ENCODE measurements at regions of chr16 and their contacts with region 1.

Region 1: DNA sequence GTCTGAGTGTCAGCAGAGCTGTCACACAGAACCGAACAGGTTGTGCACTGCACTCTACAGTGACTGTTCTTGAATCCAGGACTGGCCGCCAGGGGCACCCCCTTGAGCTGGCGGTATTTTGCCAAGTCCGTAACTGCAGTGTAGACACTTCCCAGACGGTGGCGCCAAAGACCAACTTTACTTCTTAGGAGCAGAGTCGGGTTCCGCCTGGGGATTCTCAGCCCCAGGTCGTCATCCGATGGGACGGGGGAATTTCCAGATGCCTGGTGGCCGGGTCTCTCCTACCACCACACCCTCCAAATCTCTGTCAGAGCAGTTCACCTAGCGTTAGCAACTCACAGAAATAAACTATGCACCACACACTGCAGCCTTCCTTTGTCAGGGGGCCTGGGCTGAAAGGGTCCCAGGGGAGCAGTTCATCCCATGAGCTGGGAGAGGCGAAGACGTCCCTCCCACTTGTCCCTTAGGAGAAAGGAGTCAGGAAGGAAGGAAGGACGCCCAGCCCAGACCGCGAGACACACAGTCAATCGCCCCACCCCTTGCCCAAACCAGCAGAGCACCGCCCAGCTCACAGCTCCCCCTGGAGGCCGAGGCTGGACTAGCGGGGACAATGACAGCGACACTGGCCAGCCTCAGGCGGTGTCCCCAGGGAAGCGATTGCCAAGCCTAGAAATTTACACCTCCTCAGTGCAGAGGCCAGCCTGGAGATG is 7.4 kb upstream of the RIPOR1 start:
- DNase-seq: peak; percentile 95
- ATAC-seq: peak; percentile 70
- H3K4me3 Mint-ChIP-seq: peak overlapping the region; percentile 89
- H3K27ac Mint-ChIP-seq: peak overlapping the region; percentile 98
- H3K4me1 Mint-ChIP-seq: peaks cover 75% of the 10 kb centered on the region
- H3K27me3 Mint-ChIP-seq: no peaks in the 10 kb centered on the region
- CTCF ChIP-seq: peak; percentile 85

Region 2: DNA sequence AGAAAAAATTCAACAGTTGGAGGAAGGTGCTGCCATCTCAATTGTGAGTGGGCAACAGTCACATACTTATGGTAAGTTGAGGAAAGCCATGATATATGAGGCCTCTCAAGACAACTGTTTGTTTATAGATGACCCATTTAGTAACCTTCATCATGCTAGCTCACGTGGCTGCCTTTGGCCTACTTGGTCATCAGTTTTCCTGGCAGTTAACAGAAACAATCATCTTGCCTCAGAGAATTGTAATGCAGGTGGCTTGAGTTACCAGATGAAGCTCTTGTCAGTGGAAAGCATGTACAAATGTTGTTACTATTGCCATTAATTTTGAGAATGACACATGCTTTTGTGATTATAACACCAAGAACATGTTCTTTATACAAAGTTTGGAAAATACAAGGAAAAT is 142.6 kb before region 1 on chr16:
- CTCF ChIA-PET with region 1: no interaction called
- POLR2A ChIA-PET with region 1: interaction called, 12 read pairs
- intact Hi-C with region 1: no loop called
- DNase-seq: no peak
- ATAC-seq: no peak
- H3K4me3 Mint-ChIP-seq: no peak overlapping the region
- H3K27ac Mint-ChIP-seq: no peak overlapping the region
- H3K4me1 Mint-ChIP-seq: no peaks in the 10 kb centered on the region
- H3K27me3 Mint-ChIP-seq: peaks cover 5% of the 10 kb centered on the region
- CTCF ChIP-seq: no peak

Region 3: GRCh38 chr16:67499106-67499505 is 22.1 kb before region 1 on chr16:
- CTCF ChIA-PET with region 1: interaction called, 298 read pairs
- POLR2A ChIA-PET with region 1: interaction called, 98 read pairs
- intact Hi-C with region 1: loop called (anchors 1 kb)
- DNase-seq: no peak
- ATAC-seq: no peak
- H3K4me3 Mint-ChIP-seq: no peak overlapping the region
- H3K27ac Mint-ChIP-seq: no peak overlapping the region
- H3K4me1 Mint-ChIP-seq: peaks cover 28% of the 10 kb centered on the region
- H3K27me3 Mint-ChIP-seq: no peaks in the 10 kb centered on the region
- CTCF ChIP-seq: no peak

Region 4: DNA sequence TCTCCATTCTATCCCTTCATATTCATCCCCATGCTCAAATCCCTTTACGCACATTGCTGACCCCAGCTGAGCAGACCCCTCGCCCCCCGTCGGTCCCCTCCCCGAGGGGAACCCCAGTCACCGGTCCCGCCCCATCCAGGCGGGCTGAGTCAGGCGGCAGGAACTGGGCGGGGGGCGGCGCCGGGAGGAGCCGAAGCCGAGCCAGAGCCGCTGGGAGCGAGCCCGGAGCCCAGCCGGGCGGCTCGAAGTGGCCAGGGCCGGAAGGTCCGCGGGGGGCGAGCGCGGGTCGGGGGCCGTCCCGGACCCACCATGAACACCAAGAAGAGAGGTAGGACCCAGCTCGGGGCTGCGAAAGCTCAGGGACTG is 16.0 kb after region 1 on chr16:
- CTCF ChIA-PET with region 1: interaction called, 34 read pairs
- POLR2A ChIA-PET with region 1: interaction called, 79 read pairs
- intact Hi-C with region 1: loop called (anchors 1 kb)
- DNase-seq: no peak
- ATAC-seq: peak; percentile 47
- H3K4me3 Mint-ChIP-seq: peak overlapping the region; percentile 90
- H3K27ac Mint-ChIP-seq: peak overlapping the region; percentile 93
- H3K4me1 Mint-ChIP-seq: peaks cover 82% of the 10 kb centered on the region
- H3K27me3 Mint-ChIP-seq: no peaks in the 10 kb centered on the region
- CTCF ChIP-seq: no peak

Region 5: GRCh38 chr16:67641779-67642708 is 120.8 kb after region 1 on chr16:
- CTCF ChIA-PET with region 1: interaction called, 56 read pairs
- POLR2A ChIA-PET with region 1: interaction called, 43 read pairs
- intact Hi-C with region 1: loop called (anchors 1 kb)
- DNase-seq: no peak
- ATAC-seq: no peak
- H3K4me3 Mint-ChIP-seq: no peak overlapping the region
- H3K27ac Mint-ChIP-seq: no peak overlapping the region
- H3K4me1 Mint-ChIP-seq: peaks cover 17% of the 10 kb centered on the region
- H3K27me3 Mint-ChIP-seq: no peaks in the 10 kb centered on the region
- CTCF ChIP-seq: no peak

Region 6: GRCh38 chr16:67667817-67668494 is 146.7 kb after region 1 on chr16:
- CTCF ChIA-PET with region 1: interaction called, 44 read pairs
- POLR2A ChIA-PET with region 1: interaction called, 9 read pairs
- intact Hi-C with region 1: loop called (anchors 1 kb)
- DNase-seq: peak; percentile 66
- ATAC-seq: peak; percentile 84
- H3K4me3 Mint-ChIP-seq: peak overlapping the region; percentile 87
- H3K27ac Mint-ChIP-seq: peak overlapping the region; percentile 85
- H3K4me1 Mint-ChIP-seq: peaks cover 49% of the 10 kb centered on the region
- H3K27me3 Mint-ChIP-seq: no peaks in the 10 kb centered on the region
- CTCF ChIP-seq: no peak

Region 7: GRCh38 chr16:67993189-67994039 is 472.2 kb after region 1 on chr16:
- CTCF ChIA-PET with region 1: no interaction called
- POLR2A ChIA-PET with region 1: no interaction called
- intact Hi-C with region 1: loop called (anchors 10 kb)
- DNase-seq: peak; percentile 88
- ATAC-seq: peak; percentile 77
- H3K4me3 Mint-ChIP-seq: peak overlapping the region; percentile 77
- H3K27ac Mint-ChIP-seq: peak overlapping the region; percentile 98
- H3K4me1 Mint-ChIP-seq: peaks cover 78% of the 10 kb centered on the region
- H3K27me3 Mint-ChIP-seq: no peaks in the 10 kb centered on the region
- CTCF ChIP-seq: peak; percentile 47

Measured in activated B cell treated with CpG ODN at 0.5 μM for 24 hours (primary cell).